CD8-positive, alpha-beta T cell (primary cell): ENCODE measurements at regions of chr11 and their contacts with region 1.

Region 1: GRCh38 chr11:62394825-62395538 is 23.9 kb upstream of the SCGB1A1 start:
- DNase-seq: peak in 8 of 9 experiments; percentile 34 to 82 (median 49)
- ATAC-seq: peak; percentile 75
- H3K4me3 ChIP-seq: no peak overlapping the region
- H3K4me3 Mint-ChIP-seq: no peak overlapping the region
- H3K27ac ChIP-seq: no peak overlapping the region
- H3K27ac Mint-ChIP-seq: no peak overlapping the region
- H3K4me1 ChIP-seq: peaks cover 20% of the 10 kb centered on the region
- H3K4me1 Mint-ChIP-seq: peaks cover 32% of the 10 kb centered on the region
- H3K27me3 ChIP-seq: no peaks in the 10 kb centered on the region
- H3K27me3 Mint-ChIP-seq: no peaks in the 10 kb centered on the region
- CTCF ChIP-seq: peak; percentile 66

Region 2: DNA sequence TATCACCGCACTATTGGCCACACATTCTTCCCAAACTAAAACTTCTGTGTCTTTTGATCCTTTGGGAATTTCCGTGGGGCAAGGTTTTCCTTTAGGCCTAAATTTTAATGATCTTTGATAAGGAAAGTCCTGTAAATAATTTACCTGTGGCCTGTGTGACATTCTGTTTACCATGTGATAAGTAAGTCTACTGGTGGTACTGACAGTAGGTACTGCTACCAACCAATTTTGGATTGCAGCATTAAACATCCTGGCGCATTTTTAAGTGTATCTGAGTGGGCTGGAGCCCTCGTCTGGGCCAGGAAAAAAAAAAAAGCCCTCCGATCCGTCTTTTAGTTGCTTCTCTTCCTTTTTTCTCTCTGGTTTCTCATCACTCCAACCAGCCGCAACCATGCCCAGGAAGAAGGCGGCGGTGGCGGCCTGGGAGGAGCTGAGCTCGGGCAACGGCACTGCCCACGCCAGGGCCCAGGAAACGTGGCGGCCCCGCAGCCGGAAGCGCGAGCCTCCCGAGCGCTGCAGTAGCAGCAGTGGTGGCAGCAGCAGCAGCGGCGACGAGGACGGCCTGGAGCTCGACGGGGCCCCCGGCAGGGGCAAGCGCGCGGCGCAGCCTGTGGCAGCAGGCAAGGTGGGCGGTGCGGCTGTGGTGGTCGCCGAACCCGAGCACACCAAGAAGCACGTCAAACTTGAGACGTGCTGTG is 24.1 kb before region 1 on chr11:
- CTCF ChIA-PET with region 1: interaction called, 17 read pairs
- POLR2A ChIA-PET with region 1: no interaction called
- intact Hi-C with region 1: no loop called
- DNase-seq: peak; percentile 12 to 76 (median 38)
- ATAC-seq: peak; percentile 87
- H3K4me3 ChIP-seq: no peak overlapping the region
- H3K4me3 Mint-ChIP-seq: peak overlapping the region; percentile 68
- H3K27ac ChIP-seq: peak overlapping the region in 1 of 2 experiments; percentile 69
- H3K27ac Mint-ChIP-seq: peak overlapping the region; percentile 86
- H3K4me1 ChIP-seq: no peaks in the 10 kb centered on the region
- H3K4me1 Mint-ChIP-seq: peaks cover 16% of the 10 kb centered on the region
- H3K27me3 ChIP-seq: no peaks in the 10 kb centered on the region
- H3K27me3 Mint-ChIP-seq: no peaks in the 10 kb centered on the region
- CTCF ChIP-seq: no peak

Region 3: GRCh38 chr11:62419314-62419929 is 24.4 kb after region 1 on chr11:
- CTCF ChIA-PET with region 1: interaction called, 66 read pairs
- POLR2A ChIA-PET with region 1: interaction called, 4 read pairs
- intact Hi-C with region 1: no loop called
- DNase-seq: no peak
- ATAC-seq: no peak
- H3K4me3 ChIP-seq: no peak overlapping the region
- H3K4me3 Mint-ChIP-seq: no peak overlapping the region
- H3K27ac ChIP-seq: no peak overlapping the region
- H3K27ac Mint-ChIP-seq: no peak overlapping the region
- H3K4me1 ChIP-seq: peaks cover 1% of the 10 kb centered on the region
- H3K4me1 Mint-ChIP-seq: peaks cover 8% of the 10 kb centered on the region
- H3K27me3 ChIP-seq: no peaks in the 10 kb centered on the region
- H3K27me3 Mint-ChIP-seq: no peaks in the 10 kb centered on the region
- CTCF ChIP-seq: no peak

Region 4: GRCh38 chr11:62536301-62536957 is 141.4 kb after region 1 on chr11:
- CTCF ChIA-PET with region 1: interaction called, 38 read pairs
- POLR2A ChIA-PET with region 1: no interaction called
- intact Hi-C with region 1: no loop called
- DNase-seq: no peak
- ATAC-seq: no peak
- H3K4me3 ChIP-seq: no peak overlapping the region
- H3K4me3 Mint-ChIP-seq: no peak overlapping the region
- H3K27ac ChIP-seq: no peak overlapping the region
- H3K27ac Mint-ChIP-seq: no peak overlapping the region
- H3K4me1 ChIP-seq: peaks cover 33% of the 10 kb centered on the region
- H3K4me1 Mint-ChIP-seq: peaks cover 25% of the 10 kb centered on the region
- H3K27me3 ChIP-seq: no peaks in the 10 kb centered on the region
- H3K27me3 Mint-ChIP-seq: no peaks in the 10 kb centered on the region
- CTCF ChIP-seq: no peak

Region 5: GRCh38 chr11:62556108-62556871 is 161.3 kb after region 1 on chr11:
- CTCF ChIA-PET with region 1: interaction called, 92 read pairs
- POLR2A ChIA-PET with region 1: interaction called, 3 read pairs
- intact Hi-C with region 1: loop called (anchors 1 kb)
- DNase-seq: peak; percentile 72 to 96 (median 90)
- ATAC-seq: peak; percentile 52
- H3K4me3 ChIP-seq: peak overlapping the region; percentile 14 to 28
- H3K4me3 Mint-ChIP-seq: peak overlapping the region; percentile 77
- H3K27ac ChIP-seq: peak overlapping the region; percentile 86 to 92
- H3K27ac Mint-ChIP-seq: peak overlapping the region; percentile 97
- H3K4me1 ChIP-seq: peaks cover 87% of the 10 kb centered on the region
- H3K4me1 Mint-ChIP-seq: peaks cover 86% of the 10 kb centered on the region
- H3K27me3 ChIP-seq: no peaks in the 10 kb centered on the region
- H3K27me3 Mint-ChIP-seq: no peaks in the 10 kb centered on the region
- CTCF ChIP-seq: no peak

Region 6: GRCh38 chr11:62860835-62861563 is 466.0 kb after region 1 on chr11:
- CTCF ChIA-PET with region 1: interaction called, 3 read pairs
- POLR2A ChIA-PET with region 1: interaction called, 4 read pairs
- intact Hi-C with region 1: loop called in 1 of 2 experiments (anchors 5 kb)
- DNase-seq: no peak
- ATAC-seq: no peak
- H3K4me3 ChIP-seq: no peak overlapping the region
- H3K4me3 Mint-ChIP-seq: no peak overlapping the region
- H3K27ac ChIP-seq: no peak overlapping the region
- H3K27ac Mint-ChIP-seq: no peak overlapping the region
- H3K4me1 ChIP-seq: peaks cover 6% of the 10 kb centered on the region
- H3K4me1 Mint-ChIP-seq: peaks cover 21% of the 10 kb centered on the region
- H3K27me3 ChIP-seq: no peaks in the 10 kb centered on the region
- H3K27me3 Mint-ChIP-seq: no peaks in the 10 kb centered on the region
- CTCF ChIP-seq: no peak